CD8-positive, alpha-beta T cell (primary cell): ENCODE measurements at regions of chr14 and their contacts with region 1.

Region 1: GRCh38 chr14:35826218-35826951 is at the start of gene BRMS1L:
- DNase-seq: peak; percentile 91 to 98 (median 96)
- ATAC-seq: peak; percentile 98
- H3K4me3 ChIP-seq: peak within 1 kb of the TSS; percentile 92 to 97
- H3K4me3 Mint-ChIP-seq: peak within 1 kb of the TSS; percentile 95
- H3K27ac ChIP-seq: peak within 1 kb of the TSS; percentile 88 to 91
- H3K27ac Mint-ChIP-seq: peak within 1 kb of the TSS; percentile 89
- H3K4me1 ChIP-seq: no peaks in the 10 kb centered on the region
- H3K4me1 Mint-ChIP-seq: peaks cover 24% of the 10 kb centered on the region
- H3K27me3 ChIP-seq: no peaks in the 10 kb centered on the region
- H3K27me3 Mint-ChIP-seq: no peaks in the 10 kb centered on the region
- CTCF ChIP-seq: no peak
- total RNA-seq, gene BRMS1L: 15.5 to 17.9 TPM

Region 2: GRCh38 chr14:34461334-34462131 is 1364.9 kb before region 1 on chr14:
- CTCF ChIA-PET with region 1: no interaction called
- POLR2A ChIA-PET with region 1: no interaction called
- intact Hi-C with region 1: loop called (anchors 10 kb)
- DNase-seq: peak in 7 of 9 experiments; percentile 1 to 50 (median 22)
- ATAC-seq: peak; percentile 1
- H3K4me3 ChIP-seq: peak overlapping the region; percentile 51 to 70
- H3K4me3 Mint-ChIP-seq: peak overlapping the region; percentile 87
- H3K27ac ChIP-seq: peak overlapping the region; percentile 53 to 63
- H3K27ac Mint-ChIP-seq: peak overlapping the region; percentile 82
- H3K4me1 ChIP-seq: peaks cover 19% of the 10 kb centered on the region
- H3K4me1 Mint-ChIP-seq: peaks cover 20% of the 10 kb centered on the region
- H3K27me3 ChIP-seq: no peaks in the 10 kb centered on the region
- H3K27me3 Mint-ChIP-seq: no peaks in the 10 kb centered on the region
- CTCF ChIP-seq: no peak

Region 3: DNA sequence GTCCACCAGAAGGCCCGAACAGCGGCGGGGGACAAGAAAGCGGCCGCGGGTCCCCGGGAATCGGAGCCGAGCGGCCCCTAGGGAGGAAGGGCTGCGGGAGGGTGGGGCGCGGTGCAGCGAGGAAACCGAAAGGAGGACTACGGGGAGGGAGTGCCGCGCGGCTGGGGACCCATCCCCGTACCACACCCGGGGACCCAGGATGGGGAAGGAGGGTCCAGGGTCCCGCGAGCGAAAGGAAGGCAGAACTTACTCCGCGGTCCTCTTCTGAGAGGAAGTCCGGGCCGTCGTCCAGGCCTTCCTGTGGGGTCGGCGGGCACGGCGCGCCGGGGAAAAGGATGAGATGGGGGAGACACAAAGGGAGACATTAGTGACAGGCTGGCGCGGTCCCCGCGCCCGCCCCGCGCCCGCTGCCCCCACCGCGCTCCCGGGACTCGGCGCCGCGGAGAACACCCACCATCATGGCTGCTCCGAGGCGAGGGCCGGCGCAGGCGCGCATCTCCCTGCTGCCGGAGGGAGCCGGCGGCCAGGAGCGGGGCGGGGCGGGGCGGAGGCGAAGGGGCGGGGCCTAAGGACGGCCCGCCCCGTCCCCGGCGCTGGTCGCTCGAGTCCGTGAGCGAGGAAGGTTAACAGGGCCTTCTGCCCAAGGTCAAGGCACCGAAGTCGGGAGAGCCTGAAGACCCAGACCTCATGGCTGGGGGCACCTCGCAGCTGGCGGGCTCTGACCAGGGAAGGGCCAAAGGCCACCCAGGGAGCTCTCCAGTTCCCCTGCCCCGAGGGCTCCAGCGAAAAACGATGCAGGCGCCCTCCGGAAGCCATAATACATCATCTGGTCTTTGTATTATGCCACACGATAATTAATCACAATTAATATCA is 1196.5 kb before region 1 on chr14 and contains the start of gene SNX6:
- CTCF ChIA-PET with region 1: no interaction called
- POLR2A ChIA-PET with region 1: no interaction called
- intact Hi-C with region 1: loop called in 1 of 2 experiments (anchors 5 kb)
- DNase-seq: peak; percentile 70 to 92 (median 83)
- ATAC-seq: peak; percentile 96
- H3K4me3 ChIP-seq: peak within 1 kb of the TSS; percentile 95 to 100
- H3K4me3 Mint-ChIP-seq: peak within 1 kb of the TSS; percentile 94
- H3K27ac ChIP-seq: peak within 1 kb of the TSS; percentile 91 to 96
- H3K27ac Mint-ChIP-seq: peak within 1 kb of the TSS; percentile 93
- H3K4me1 ChIP-seq: peaks cover 20% of the 10 kb centered on the region
- H3K4me1 Mint-ChIP-seq: peaks cover 37% of the 10 kb centered on the region
- H3K27me3 ChIP-seq: no peaks in the 10 kb centered on the region
- H3K27me3 Mint-ChIP-seq: peaks cover 4% of the 10 kb centered on the region
- CTCF ChIP-seq: no peak
- total RNA-seq, gene SNX6: 51.2 to 53.5 TPM

Region 4: GRCh38 chr14:35292051-35292769 is 534.2 kb before region 1 on chr14 and contains the start of gene PSMA6:
- CTCF ChIA-PET with region 1: no interaction called
- POLR2A ChIA-PET with region 1: no interaction called
- intact Hi-C with region 1: loop called (anchors 1 to 5 kb)
- DNase-seq: peak; percentile 98 to 100 (median 99)
- ATAC-seq: peak; percentile 97
- H3K4me3 ChIP-seq: peak within 1 kb of the TSS; percentile 79 to 85
- H3K4me3 Mint-ChIP-seq: peak within 1 kb of the TSS; percentile 98
- H3K27ac ChIP-seq: peak within 1 kb of the TSS; percentile 82 to 91
- H3K27ac Mint-ChIP-seq: peak within 1 kb of the TSS; percentile 98
- H3K4me1 ChIP-seq: peaks cover 31% of the 10 kb centered on the region
- H3K4me1 Mint-ChIP-seq: peaks cover 48% of the 10 kb centered on the region
- H3K27me3 ChIP-seq: no peaks in the 10 kb centered on the region
- H3K27me3 Mint-ChIP-seq: no peaks in the 10 kb centered on the region
- CTCF ChIP-seq: no peak
- total RNA-seq, gene PSMA6: 72.3 to 78.9 TPM

Region 5: DNA sequence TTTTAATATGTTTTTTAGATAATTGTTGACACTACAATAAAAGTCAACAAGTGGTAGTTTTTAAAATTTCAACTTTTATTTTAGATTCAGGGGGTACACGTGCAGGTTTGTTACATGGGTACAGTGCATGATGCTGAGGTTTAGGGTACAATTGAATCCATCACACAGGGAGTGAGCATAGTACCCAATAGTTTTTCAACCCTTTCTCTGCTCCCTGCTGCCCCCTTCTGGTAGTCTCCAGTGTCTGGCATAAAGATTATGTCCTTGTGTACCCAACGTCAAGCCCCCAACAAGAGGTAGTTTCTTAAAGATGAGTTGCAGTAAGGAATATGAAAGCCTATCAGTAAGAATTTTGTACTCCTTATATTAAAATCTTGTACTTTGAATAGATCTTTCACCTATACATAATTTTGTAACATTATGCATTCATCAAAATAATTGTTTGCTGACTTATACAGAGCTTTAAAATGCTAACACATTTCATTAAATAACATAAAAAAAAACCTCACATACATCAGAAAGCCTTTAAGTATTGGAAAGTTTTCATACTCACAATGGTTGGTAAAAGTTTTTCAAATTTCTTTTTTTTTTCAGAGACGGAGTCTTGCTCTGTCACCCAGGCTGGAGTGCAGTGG is 11.9 kb before region 1 on chr14:
- CTCF ChIA-PET with region 1: interaction called, 17 read pairs
- POLR2A ChIA-PET with region 1: interaction called, 15 read pairs
- intact Hi-C with region 1: loop called (anchors 1 to 2 kb)
- DNase-seq: peak; percentile 56 to 92 (median 83)
- ATAC-seq: peak; percentile 93
- H3K4me3 ChIP-seq: no peak overlapping the region
- H3K4me3 Mint-ChIP-seq: no peak overlapping the region
- H3K27ac ChIP-seq: no peak overlapping the region
- H3K27ac Mint-ChIP-seq: no peak overlapping the region
- H3K4me1 ChIP-seq: no peaks in the 10 kb centered on the region
- H3K4me1 Mint-ChIP-seq: peaks cover 5% of the 10 kb centered on the region
- H3K27me3 ChIP-seq: no peaks in the 10 kb centered on the region
- H3K27me3 Mint-ChIP-seq: no peaks in the 10 kb centered on the region
- CTCF ChIP-seq: peak; percentile 57

Region 6: GRCh38 chr14:35932659-35933322 is 106.4 kb after region 1 on chr14:
- CTCF ChIA-PET with region 1: no interaction called
- POLR2A ChIA-PET with region 1: no interaction called
- intact Hi-C with region 1: loop called in 1 of 2 experiments (anchors 2 kb)
- DNase-seq: peak in 6 of 9 experiments; percentile 9 to 65 (median 28)
- ATAC-seq: peak; percentile 79
- H3K4me3 ChIP-seq: peak overlapping the region; percentile 31 to 56
- H3K4me3 Mint-ChIP-seq: peak overlapping the region; percentile 88
- H3K27ac ChIP-seq: peak overlapping the region in 1 of 2 experiments; percentile 30
- H3K27ac Mint-ChIP-seq: peak overlapping the region; percentile 90
- H3K4me1 ChIP-seq: peaks cover 17% of the 10 kb centered on the region
- H3K4me1 Mint-ChIP-seq: peaks cover 36% of the 10 kb centered on the region
- H3K27me3 ChIP-seq: no peaks in the 10 kb centered on the region
- H3K27me3 Mint-ChIP-seq: no peaks in the 10 kb centered on the region
- CTCF ChIP-seq: no peak

Region 7: GRCh38 chr14:35963209-35963608 is 136.8 kb after region 1 on chr14:
- CTCF ChIA-PET with region 1: no interaction called
- POLR2A ChIA-PET with region 1: no interaction called
- intact Hi-C with region 1: no loop called
- DNase-seq: no peak
- ATAC-seq: no peak
- H3K4me3 ChIP-seq: no peak overlapping the region
- H3K4me3 Mint-ChIP-seq: no peak overlapping the region
- H3K27ac ChIP-seq: no peak overlapping the region
- H3K27ac Mint-ChIP-seq: no peak overlapping the region
- H3K4me1 ChIP-seq: no peaks in the 10 kb centered on the region
- H3K4me1 Mint-ChIP-seq: no peaks in the 10 kb centered on the region
- H3K27me3 ChIP-seq: no peaks in the 10 kb centered on the region
- H3K27me3 Mint-ChIP-seq: peaks cover 2% of the 10 kb centered on the region
- CTCF ChIP-seq: no peak

Region 8: DNA sequence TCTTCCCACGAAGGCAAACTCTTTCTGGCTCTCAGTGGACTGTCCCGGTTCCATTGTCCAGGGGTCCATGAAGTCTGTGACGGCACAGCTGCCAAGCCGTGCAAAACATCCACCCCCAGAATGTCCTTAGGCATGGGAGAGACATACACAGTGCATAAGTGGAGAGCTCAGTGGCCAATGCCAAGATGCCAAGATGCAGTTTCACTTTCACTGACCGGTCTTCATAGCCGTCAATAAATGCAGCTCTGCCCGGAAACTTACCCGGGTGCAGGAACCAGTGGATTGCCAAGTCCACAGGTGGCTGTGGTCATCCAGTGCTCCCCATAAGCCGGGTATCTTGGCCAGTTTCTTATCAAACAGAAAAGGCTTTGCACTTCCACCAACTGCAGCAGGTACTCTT is 187.9 kb after region 1 on chr14:
- CTCF ChIA-PET with region 1: no interaction called
- POLR2A ChIA-PET with region 1: no interaction called
- intact Hi-C with region 1: no loop called
- DNase-seq: no peak
- ATAC-seq: no peak
- H3K4me3 ChIP-seq: no peak overlapping the region
- H3K4me3 Mint-ChIP-seq: no peak overlapping the region
- H3K27ac ChIP-seq: no peak overlapping the region
- H3K27ac Mint-ChIP-seq: no peak overlapping the region
- H3K4me1 ChIP-seq: no peaks in the 10 kb centered on the region
- H3K4me1 Mint-ChIP-seq: no peaks in the 10 kb centered on the region
- H3K27me3 ChIP-seq: no peaks in the 10 kb centered on the region
- H3K27me3 Mint-ChIP-seq: no peaks in the 10 kb centered on the region
- CTCF ChIP-seq: no peak

Region 9: DNA sequence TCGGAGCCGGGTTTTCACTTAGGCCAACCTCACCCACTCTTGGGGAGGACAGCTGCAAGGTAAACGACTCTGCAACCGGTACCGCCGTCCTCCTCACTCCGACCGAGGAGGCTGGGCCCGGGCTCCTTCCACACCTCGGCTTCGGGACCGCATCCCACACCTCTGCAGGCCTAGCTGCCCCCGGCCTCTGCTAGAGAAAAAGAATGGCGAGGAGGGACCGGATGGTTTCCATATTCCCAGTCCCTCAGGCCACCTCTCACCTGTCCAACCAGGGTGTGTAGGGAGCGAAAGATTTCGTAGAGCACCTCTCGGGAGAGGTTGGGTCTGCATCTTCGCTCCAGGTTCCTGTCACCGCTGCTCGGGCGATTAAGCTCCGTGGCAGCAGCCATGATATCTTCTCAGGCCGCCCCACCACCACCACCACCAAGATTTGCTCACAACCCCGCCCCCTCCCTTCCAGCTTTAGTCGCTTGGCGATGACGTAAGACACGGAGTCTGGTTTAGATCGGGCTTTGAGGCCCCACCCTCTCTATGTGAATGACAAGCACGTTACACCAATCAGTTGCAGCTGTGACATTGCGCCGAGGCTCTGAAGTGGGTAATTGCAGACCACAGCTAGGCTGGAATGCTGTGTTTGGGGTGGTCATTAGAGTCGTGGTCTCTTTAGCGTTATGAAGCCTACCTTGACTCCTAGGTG is 494.0 kb after region 1 on chr14 and contains the start of gene MBIP:
- CTCF ChIA-PET with region 1: no interaction called
- POLR2A ChIA-PET with region 1: no interaction called
- intact Hi-C with region 1: loop called (anchors 1 to 2 kb)
- DNase-seq: peak; percentile 79 to 97 (median 89)
- ATAC-seq: peak; percentile 96
- H3K4me3 ChIP-seq: peak within 1 kb of the TSS; percentile 86 to 91
- H3K4me3 Mint-ChIP-seq: peak within 1 kb of the TSS; percentile 98
- H3K27ac ChIP-seq: peak within 1 kb of the TSS; percentile 63 to 74
- H3K27ac Mint-ChIP-seq: peak within 1 kb of the TSS; percentile 97
- H3K4me1 ChIP-seq: peaks cover 16% of the 10 kb centered on the region
- H3K4me1 Mint-ChIP-seq: peaks cover 41% of the 10 kb centered on the region
- H3K27me3 ChIP-seq: no peaks in the 10 kb centered on the region
- H3K27me3 Mint-ChIP-seq: peaks cover 5% of the 10 kb centered on the region
- CTCF ChIP-seq: no peak
- total RNA-seq, gene MBIP: 57.4 to 58.1 TPM